ENCODE measurements at regions of chr5 and their contacts with region 1.

Region 1: GRCh38 chr5:42767491-42768105 is 11.0 kb downstream of the CCDC152 start:
- H3K4me3 ChIP-seq: no peak overlapping the region
- H3K27ac ChIP-seq: no peak overlapping the region
- H3K4me1 ChIP-seq: no peaks in the 10 kb centered on the region
- CTCF ChIP-seq: no peak

Region 2: DNA sequence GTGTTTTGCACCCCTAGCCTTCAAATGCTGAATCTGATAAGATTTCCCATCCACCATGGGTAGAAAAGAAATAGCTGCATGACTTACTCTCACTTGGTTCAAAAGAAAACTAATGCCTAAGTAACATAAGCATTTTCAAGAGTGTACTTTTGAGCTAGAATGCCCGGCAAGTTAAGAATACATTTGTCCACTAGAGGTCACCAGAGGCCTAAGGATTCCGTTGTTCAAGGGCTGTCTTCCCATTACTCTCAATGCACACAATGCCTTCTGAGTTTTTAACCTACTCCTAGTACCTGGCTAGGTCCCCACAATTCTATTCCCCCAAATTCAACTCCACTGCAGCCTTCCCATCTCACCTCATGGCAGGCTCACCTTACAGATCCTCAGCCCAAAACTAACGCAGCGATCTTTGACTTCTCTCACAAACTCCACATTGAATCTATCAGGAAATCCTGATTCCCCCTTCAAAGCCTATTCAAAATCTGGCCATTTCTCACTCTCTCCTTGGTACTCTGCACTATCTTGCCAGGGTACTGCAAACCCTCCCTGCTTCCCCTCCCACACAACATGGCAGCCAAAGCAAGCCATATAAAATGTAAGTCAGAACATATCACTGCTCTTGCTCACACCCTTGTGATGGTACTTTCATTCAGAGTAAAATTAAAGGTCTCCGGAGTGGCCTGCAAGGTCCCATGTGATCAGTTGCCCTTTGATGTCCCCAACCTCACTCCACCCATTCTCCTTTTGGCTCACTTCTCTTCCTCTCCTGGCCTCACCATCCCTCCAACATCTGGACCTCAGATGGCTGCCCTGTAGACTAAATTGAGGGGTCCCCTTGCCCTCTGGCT is 910.7 kb before region 1 on chr5:
- CTCF ChIA-PET with region 1: interaction called, 11 read pairs
- POLR2A ChIA-PET with region 1: no interaction called
- H3K4me3 ChIP-seq: no peak overlapping the region
- H3K27ac ChIP-seq: no peak overlapping the region
- H3K4me1 ChIP-seq: no peaks in the 10 kb centered on the region
- CTCF ChIP-seq: peak; percentile 67; the same call in 1 of the 2 replicates

Region 3: GRCh38 chr5:42745426-42745825 is 22.2 kb before region 1 on chr5:
- CTCF ChIA-PET with region 1: interaction called, 17 read pairs
- POLR2A ChIA-PET with region 1: no interaction called
- H3K4me3 ChIP-seq: no peak overlapping the region
- H3K27ac ChIP-seq: no peak overlapping the region
- H3K4me1 ChIP-seq: no peaks in the 10 kb centered on the region
- CTCF ChIP-seq: 0 out of 2 replicates have a peak, but pooled peaks have one; percentile 11

Region 4: DNA sequence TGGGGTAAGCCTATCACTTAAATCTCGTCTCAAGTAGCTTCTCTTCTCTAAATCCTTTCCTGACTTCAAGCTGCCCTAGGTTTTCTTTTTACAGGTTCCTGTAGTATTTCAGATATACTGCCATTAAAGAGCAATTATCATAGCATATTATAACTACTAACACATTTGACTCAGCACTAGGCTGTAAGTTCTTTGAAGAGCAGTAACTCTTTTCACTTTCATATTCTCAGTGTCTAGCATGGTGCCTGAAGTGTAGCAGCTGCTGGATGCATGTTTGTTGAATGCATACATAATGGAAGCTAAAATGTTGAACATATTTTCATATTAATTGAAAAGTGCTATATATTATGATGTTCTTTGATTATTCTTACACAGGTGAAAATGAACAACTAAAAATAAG is 11.5 kb after region 1 on chr5:
- CTCF ChIA-PET with region 1: interaction called, 20 read pairs
- POLR2A ChIA-PET with region 1: no interaction called
- H3K4me3 ChIP-seq: no peak overlapping the region
- H3K27ac ChIP-seq: no peak overlapping the region
- H3K4me1 ChIP-seq: no peaks in the 10 kb centered on the region; the same call in 1 of the 2 replicates
- CTCF ChIP-seq: no peak

Region 5: GRCh38 chr5:42898760-42899159 is 131.2 kb after region 1 on chr5:
- CTCF ChIA-PET with region 1: no interaction called
- POLR2A ChIA-PET with region 1: no interaction called
- H3K4me3 ChIP-seq: no peak overlapping the region
- H3K27ac ChIP-seq: no peak overlapping the region
- H3K4me1 ChIP-seq: no peaks in the 10 kb centered on the region
- CTCF ChIP-seq: no peak

Region 6: GRCh38 chr5:42985129-42986037 is 217.8 kb after region 1 on chr5:
- CTCF ChIA-PET with region 1: no interaction called
- POLR2A ChIA-PET with region 1: no interaction called
- H3K4me3 ChIP-seq: no peak overlapping the region
- H3K27ac ChIP-seq: no peak overlapping the region
- H3K4me1 ChIP-seq: no peaks in the 10 kb centered on the region
- CTCF ChIP-seq: no peak

Measured in HEK293 (cell line).